IMR-90 (cell line): ENCODE measurements at regions of chr11 and their contacts with region 1.

Region 1: DNA sequence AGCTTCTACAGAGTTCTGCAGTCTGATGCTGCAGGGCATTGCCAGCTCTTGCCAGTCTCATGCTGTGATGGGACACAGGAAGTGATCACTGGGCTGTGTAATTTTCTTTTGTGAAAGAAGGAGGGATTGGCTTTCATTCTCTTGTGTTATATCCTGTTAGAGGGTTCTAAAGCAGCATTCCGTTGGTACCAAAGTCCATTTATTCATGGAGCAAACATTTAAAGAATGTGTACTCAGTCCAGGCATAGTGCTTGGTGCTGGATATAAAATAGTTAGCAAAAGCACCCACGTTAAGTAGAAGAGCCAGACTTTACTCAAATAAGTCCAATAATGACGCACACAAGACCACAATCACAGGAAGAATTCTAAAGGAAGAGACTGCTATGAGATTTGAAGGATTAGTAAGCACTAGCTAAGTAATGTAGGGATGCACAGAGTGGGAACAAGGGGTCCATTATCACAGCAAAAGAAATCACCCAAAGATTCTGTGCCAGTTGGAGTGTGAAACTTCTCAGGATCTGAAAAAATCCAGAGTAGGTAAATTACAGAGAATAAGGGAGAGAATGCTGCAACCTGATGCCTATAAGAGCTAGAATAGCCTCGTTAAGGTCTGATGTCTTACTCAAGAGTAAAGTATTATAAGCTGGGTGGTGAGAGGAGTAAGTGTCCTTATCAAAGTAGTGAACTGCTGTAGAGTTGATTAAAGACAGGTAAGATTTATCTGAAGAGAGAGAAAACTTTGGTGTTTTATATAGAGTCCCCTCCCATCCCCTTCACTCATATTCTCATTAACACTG is 728.3 kb downstream of the METTL15 start:
- DNase-seq: peak; percentile 99
- ATAC-seq: peak; percentile 79
- H3K4me3 ChIP-seq: no peak overlapping the region
- H3K27ac ChIP-seq: peak overlapping the region; percentile 98
- H3K4me1 ChIP-seq: peaks cover 14% of the 10 kb centered on the region
- H3K27me3 ChIP-seq: no peaks in the 10 kb centered on the region
- CTCF ChIP-seq: no peak
- POLR2A ChIP-seq: peak; percentile 45
- RAD21 ChIP-seq: peak; percentile 8; the same call in 1 of the 2 replicates

Region 2: DNA sequence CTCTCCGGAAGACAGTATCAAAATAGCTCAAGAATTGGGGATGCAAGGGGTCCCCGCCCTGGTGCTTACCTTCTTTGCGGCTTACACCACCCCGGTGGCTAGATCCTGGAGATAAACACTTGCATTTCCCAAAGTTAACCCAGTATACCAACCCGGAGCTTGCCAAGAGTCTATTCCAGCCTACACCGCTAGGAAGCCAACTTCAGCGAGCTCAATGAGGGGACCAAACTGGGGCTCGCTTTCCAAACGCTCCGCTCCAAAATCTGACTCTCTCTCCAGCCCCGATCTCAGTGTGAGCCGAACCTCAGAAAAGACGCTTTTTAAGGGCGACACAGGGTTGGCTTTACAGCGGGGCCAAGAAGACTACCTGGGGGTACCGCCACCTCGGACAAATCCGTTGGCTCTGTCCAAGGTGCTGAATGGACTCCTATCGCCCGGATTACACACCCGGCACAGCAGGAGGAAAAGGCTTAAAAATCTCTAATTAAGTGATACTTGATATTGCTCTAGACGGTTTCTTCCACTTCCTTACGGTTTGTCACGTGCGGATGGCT is 1116.1 kb before region 1 on chr11:
- CTCF ChIA-PET with region 1: no interaction called
- POLR2A ChIA-PET with region 1: no interaction called
- dilution Hi-C with region 1: no loop called
- in situ Hi-C with region 1: loop called (anchors 25 kb)
- intact Hi-C with region 1: loop called (anchors 5 kb)
- DNase-seq: peak; percentile 68
- ATAC-seq: no peak
- H3K4me3 ChIP-seq: peak overlapping the region; percentile 0; the same call in 1 of the 2 replicates
- H3K27ac ChIP-seq: no peak overlapping the region
- H3K4me1 ChIP-seq: peaks cover 6% of the 10 kb centered on the region
- H3K27me3 ChIP-seq: no peaks in the 10 kb centered on the region
- CTCF ChIP-seq: 0 out of 2 replicates have a peak, but pooled peaks have one; percentile 18
- POLR2A ChIP-seq: no peak
- RAD21 ChIP-seq: no peak

Region 3: GRCh38 chr11:28464252-28464867 is 372.1 kb before region 1 on chr11:
- CTCF ChIA-PET with region 1: no interaction called
- POLR2A ChIA-PET with region 1: no interaction called
- dilution Hi-C with region 1: no loop called
- in situ Hi-C with region 1: no loop called
- intact Hi-C with region 1: loop called (anchors 1 kb)
- DNase-seq: peak; percentile 86
- ATAC-seq: peak; percentile 77
- H3K4me3 ChIP-seq: no peak overlapping the region
- H3K27ac ChIP-seq: peak overlapping the region; percentile 98
- H3K4me1 ChIP-seq: peaks cover 22% of the 10 kb centered on the region
- H3K27me3 ChIP-seq: no peaks in the 10 kb centered on the region
- CTCF ChIP-seq: no peak
- POLR2A ChIP-seq: no peak
- RAD21 ChIP-seq: no peak; the same call in none of the 2 replicates

Region 4: GRCh38 chr11:28963189-28963588 is 126.7 kb after region 1 on chr11:
- CTCF ChIA-PET with region 1: no interaction called
- POLR2A ChIA-PET with region 1: interaction called, 4 read pairs
- dilution Hi-C with region 1: no loop called
- in situ Hi-C with region 1: no loop called
- intact Hi-C with region 1: loop called (anchors 1 kb)
- DNase-seq: peak; percentile 83
- ATAC-seq: peak; percentile 36
- H3K4me3 ChIP-seq: no peak overlapping the region
- H3K27ac ChIP-seq: peak overlapping the region; percentile 87; the same call in 1 of the 2 replicates
- H3K4me1 ChIP-seq: peaks cover 13% of the 10 kb centered on the region
- H3K27me3 ChIP-seq: no peaks in the 10 kb centered on the region
- CTCF ChIP-seq: no peak
- POLR2A ChIP-seq: no peak
- RAD21 ChIP-seq: no peak

Region 5: DNA sequence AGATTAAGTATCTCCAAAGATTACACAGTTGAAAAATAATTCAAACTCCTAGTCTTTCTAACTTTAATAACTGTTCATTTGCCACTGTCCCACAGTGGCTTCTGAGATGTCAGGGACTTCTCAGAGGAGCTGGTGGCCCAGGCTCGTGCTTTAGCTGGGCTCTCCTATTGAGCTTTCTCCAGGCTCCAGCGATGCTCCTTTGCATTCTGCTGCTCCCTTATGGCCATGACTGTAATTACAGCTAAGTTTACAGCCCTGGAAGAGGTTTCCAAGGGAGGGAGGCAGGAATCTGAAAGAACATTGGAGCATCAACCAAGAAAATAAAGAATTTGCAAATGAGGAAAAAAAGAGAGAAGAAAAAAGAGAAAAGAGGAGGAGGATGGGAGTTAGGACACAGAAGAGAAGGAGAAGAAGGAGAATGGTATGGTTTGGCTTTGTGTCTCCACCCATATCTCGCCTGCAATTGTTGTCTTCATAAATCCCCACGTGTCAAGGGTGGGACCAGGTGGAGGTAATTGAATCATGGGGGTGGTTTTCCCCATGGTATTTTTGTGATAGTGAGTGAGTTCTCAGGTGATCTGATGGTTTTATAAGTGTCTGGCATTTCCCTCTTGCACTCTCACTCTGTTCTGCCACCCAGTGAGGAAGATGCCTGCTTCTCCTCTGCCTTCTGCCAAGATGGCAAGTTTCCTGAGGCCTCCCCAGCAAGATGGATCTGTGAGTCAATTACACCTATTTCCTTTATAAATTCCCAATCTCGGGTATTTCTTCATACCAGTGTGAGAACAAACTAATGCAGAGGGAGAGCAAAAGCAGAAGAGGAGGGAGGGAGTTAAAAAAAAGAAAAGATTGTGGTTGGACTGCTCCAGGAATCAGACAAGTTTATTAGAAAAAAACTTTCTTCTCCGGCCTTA is 323.3 kb after region 1 on chr11:
- CTCF ChIA-PET with region 1: interaction called, 7 read pairs
- POLR2A ChIA-PET with region 1: interaction called, 5 read pairs
- dilution Hi-C with region 1: no loop called
- in situ Hi-C with region 1: no loop called
- intact Hi-C with region 1: loop called (anchors 1 kb)
- DNase-seq: peak; percentile 90
- ATAC-seq: peak; percentile 98
- H3K4me3 ChIP-seq: no peak overlapping the region
- H3K27ac ChIP-seq: peak overlapping the region; percentile 89
- H3K4me1 ChIP-seq: peaks cover 9% of the 10 kb centered on the region
- H3K27me3 ChIP-seq: no peaks in the 10 kb centered on the region
- CTCF ChIP-seq: peak; percentile 85
- POLR2A ChIP-seq: peak; percentile 17; the same call in 1 of the 2 replicates
- RAD21 ChIP-seq: peak; percentile 94

Region 6: GRCh38 chr11:29328961-29329441 is 492.5 kb after region 1 on chr11:
- CTCF ChIA-PET with region 1: interaction called, 3 read pairs
- POLR2A ChIA-PET with region 1: interaction called, 3 read pairs
- dilution Hi-C with region 1: no loop called
- in situ Hi-C with region 1: loop called (anchors 10 kb)
- intact Hi-C with region 1: loop called (anchors 1 kb)
- DNase-seq: peak; percentile 95
- ATAC-seq: peak; percentile 80
- H3K4me3 ChIP-seq: no peak overlapping the region
- H3K27ac ChIP-seq: peak overlapping the region; percentile 54
- H3K4me1 ChIP-seq: peaks cover 16% of the 10 kb centered on the region
- H3K27me3 ChIP-seq: no peaks in the 10 kb centered on the region
- CTCF ChIP-seq: peak; percentile 88
- POLR2A ChIP-seq: peak; percentile 62
- RAD21 ChIP-seq: peak; percentile 89

Region 7: DNA sequence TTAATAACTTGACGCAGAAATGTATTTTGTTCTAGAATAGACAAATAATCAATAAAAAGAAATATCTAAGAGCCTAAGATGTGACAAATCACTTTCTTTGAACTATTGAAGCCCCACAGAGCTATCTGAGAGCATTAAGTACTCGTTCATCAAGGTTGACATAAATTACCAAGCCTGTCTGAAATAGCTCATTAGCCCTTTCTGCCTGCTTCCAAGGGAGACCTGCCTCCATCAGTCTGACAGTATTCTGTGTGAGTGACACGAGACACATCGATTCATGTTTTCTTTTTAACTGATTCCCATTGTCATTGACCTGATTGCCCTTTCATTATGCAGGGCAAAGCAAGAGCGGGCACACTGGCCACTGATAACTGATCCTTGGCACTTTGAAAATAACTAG is 832.8 kb after region 1 on chr11:
- CTCF ChIA-PET with region 1: no interaction called
- POLR2A ChIA-PET with region 1: no interaction called
- dilution Hi-C with region 1: no loop called
- in situ Hi-C with region 1: no loop called
- intact Hi-C with region 1: no loop called
- DNase-seq: no peak
- ATAC-seq: no peak
- H3K4me3 ChIP-seq: no peak overlapping the region
- H3K27ac ChIP-seq: no peak overlapping the region
- H3K4me1 ChIP-seq: no peaks in the 10 kb centered on the region
- H3K27me3 ChIP-seq: no peaks in the 10 kb centered on the region
- CTCF ChIP-seq: no peak
- POLR2A ChIP-seq: no peak
- RAD21 ChIP-seq: no peak